ENCODE measurements at regions of chr10 and their contacts with region 1.

Region 1: DNA sequence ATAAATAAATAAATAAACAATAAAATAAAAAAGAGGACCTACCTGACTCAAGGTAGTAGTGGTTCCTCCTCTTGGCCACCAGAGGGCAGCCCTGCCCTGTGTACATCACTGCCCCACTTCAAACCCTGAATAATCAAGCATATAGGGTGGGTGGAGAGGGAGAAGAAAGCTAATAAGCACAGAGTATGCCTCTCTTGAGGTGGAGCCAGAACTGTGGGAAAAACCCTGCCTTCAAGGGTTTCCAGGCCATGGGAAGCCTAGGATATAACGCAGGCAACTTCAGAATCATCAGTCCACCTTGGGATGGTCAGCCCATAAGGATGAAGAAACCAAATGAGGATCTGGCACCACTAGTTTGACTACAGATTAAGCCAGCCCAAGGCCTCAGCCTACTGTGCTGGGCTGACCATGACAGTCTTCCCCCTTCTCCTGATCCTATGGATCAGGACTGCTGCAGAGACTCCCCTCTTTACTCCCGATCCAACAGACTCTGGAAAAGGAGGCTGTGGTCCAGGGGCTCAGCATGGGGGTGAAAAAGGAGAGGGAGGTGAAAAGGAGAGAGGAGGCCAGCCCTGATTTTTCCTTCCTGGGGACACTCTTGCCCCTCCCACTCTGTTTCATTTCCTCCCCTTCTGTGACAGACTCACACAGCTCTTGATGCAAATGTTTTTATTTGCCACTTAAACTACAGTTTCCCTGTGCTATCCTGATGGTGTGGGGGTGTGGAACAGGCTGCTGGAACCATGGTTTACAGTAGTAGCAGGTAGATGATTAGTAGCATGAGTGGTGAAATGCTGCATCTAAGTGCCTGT is 10.1 kb downstream of the AVPI1 start:
- DNase-seq: peak; percentile 77
- ATAC-seq: peak; percentile 92
- H3K4me3 ChIP-seq: no peak overlapping the region
- H3K4me3 Mint-ChIP-seq: peak overlapping the region; percentile 27
- H3K27ac ChIP-seq: peak overlapping the region; percentile 35 to 51
- H3K27ac Mint-ChIP-seq: peak overlapping the region; percentile 67
- H3K4me1 ChIP-seq: peaks cover 9 to 12% of the 10 kb centered on the region in 2 donors
- H3K4me1 Mint-ChIP-seq: peaks cover 13% of the 10 kb centered on the region
- H3K27me3 ChIP-seq: no peaks in the 10 kb centered on the region
- H3K27me3 Mint-ChIP-seq: no peaks in the 10 kb centered on the region
- CTCF ChIP-seq: peak; percentile 94

Region 2: DNA sequence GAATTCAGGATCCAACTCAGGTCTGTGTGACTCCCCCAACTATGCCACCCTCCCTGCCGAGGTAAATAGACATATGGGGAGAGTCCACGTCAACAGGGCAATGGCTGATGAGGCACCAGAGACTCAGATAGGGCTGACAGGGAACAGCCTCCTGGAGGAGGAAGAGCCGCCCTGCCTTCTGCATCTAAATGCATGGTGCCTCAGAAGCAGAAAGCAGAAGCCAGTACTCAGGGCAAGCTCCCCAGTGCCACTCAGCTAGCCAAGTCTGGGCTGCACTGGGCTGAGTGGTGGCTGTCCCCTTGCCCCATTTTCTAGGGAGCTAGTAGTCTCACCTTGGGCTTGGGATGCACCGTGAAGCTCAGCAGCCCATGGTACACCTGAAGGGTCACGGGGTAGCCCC is 286.9 kb before region 1 on chr10:
- CTCF ChIA-PET with region 1: no interaction called
- POLR2A ChIA-PET with region 1: no interaction called
- intact Hi-C with region 1: no loop called
- DNase-seq: no peak
- ATAC-seq: no peak
- H3K4me3 ChIP-seq: no peak overlapping the region
- H3K4me3 Mint-ChIP-seq: no peak overlapping the region
- H3K27ac ChIP-seq: no peak overlapping the region
- H3K27ac Mint-ChIP-seq: no peak overlapping the region
- H3K4me1 ChIP-seq: no peaks in the 10 kb centered on the region
- H3K4me1 Mint-ChIP-seq: no peaks in the 10 kb centered on the region
- H3K27me3 ChIP-seq: no peaks in the 10 kb centered on the region
- H3K27me3 Mint-ChIP-seq: no peaks in the 10 kb centered on the region
- CTCF ChIP-seq: no peak

Region 3: DNA sequence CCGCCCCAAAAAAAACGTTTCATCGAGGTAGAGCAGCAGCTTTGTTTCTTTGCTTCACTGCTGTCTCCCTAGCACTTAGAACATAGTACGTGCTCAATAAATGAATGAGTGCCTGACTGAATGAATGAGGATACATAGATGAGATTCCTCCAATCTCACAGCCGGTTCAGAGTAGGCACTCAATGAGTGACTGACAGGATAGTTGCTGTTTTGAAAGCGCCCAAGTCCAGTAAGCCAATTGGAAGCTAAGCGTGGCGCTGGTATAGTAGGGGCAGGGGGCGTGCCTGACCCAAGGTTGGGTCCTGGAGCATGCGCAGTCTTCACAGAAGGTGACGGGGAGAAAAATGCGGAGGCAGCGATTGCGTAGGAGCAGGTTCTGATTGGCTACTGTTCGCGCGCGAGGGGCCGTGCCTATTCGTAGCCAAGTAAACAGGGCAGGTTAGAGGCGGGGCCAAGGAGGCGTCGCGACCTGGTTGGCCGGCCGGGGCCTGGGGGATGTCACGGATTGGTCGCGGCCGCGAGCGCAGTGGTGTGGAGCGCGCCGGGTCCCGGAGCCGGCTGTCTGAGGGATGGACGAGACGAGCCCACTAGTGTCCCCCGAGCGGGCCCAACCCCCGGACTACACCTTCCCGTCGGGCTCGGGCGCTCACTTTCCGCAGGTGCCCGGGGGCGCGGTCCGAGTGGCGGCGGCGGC is 36.7 kb before region 1 on chr10 and contains the start of gene PI4K2A:
- CTCF ChIA-PET with region 1: interaction called, 5 read pairs
- POLR2A ChIA-PET with region 1: no interaction called
- intact Hi-C with region 1: loop called (anchors 2 kb)
- DNase-seq: peak; percentile 99
- ATAC-seq: peak; percentile 96
- H3K4me3 ChIP-seq: peak within 1 kb of the TSS; percentile 43 to 84 (median 77)
- H3K4me3 Mint-ChIP-seq: peak within 1 kb of the TSS; percentile 99
- H3K27ac ChIP-seq: peak within 1 kb of the TSS; percentile 70 to 86
- H3K27ac Mint-ChIP-seq: peak within 1 kb of the TSS; percentile 97
- H3K4me1 ChIP-seq: peaks cover 8 to 18% of the 10 kb centered on the region in 2 donors
- H3K4me1 Mint-ChIP-seq: peaks cover 22% of the 10 kb centered on the region
- H3K27me3 ChIP-seq: no peaks in the 10 kb centered on the region
- H3K27me3 Mint-ChIP-seq: no peaks in the 10 kb centered on the region
- CTCF ChIP-seq: no peak
- total RNA-seq, gene PI4K2A: 17.7 and 18.4 TPM in 2 replicates

Region 4: DNA sequence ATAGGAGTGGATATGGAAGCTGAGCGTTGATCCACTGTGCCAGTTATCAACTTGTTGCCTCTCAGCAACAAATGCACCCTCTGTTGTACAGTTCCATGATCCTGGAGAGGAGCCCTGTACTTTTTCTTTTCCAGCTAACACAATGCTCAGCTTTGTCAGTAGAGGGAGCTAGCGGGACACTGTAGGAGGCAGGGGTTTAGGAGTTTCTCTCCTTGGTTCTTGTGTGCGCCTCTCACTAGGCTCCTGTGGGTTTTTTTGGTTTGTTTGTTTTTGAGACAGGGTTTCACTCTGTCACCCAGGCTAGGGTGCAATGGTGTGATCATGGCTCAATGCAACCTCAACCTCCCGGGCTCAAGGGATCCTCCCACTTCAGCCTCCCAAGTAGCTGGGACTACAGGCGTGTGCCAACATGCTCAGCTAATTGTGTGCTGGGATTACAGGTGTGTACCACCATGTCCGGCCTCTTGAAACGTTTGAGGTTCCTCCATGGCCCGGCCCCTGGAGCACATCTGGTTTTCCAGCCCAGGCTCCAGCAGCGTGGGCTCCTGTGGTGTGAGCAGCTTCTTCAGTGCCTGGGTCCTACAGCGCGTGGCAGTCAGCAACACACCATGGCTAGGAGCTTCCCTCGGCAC is 24.6 kb after region 1 on chr10:
- CTCF ChIA-PET with region 1: interaction called, 13 read pairs
- POLR2A ChIA-PET with region 1: interaction called, 3 read pairs
- intact Hi-C with region 1: no loop called
- DNase-seq: peak; percentile 66
- ATAC-seq: peak; percentile 75
- H3K4me3 ChIP-seq: no peak overlapping the region
- H3K4me3 Mint-ChIP-seq: no peak overlapping the region
- H3K27ac ChIP-seq: no peak overlapping the region
- H3K27ac Mint-ChIP-seq: no peak overlapping the region
- H3K4me1 ChIP-seq: no peaks in the 10 kb centered on the region
- H3K4me1 Mint-ChIP-seq: no peaks in the 10 kb centered on the region
- H3K27me3 ChIP-seq: peaks cover 0 to 9% (median 2%) of the 10 kb centered on the region in 4 experiments
- H3K27me3 Mint-ChIP-seq: peaks cover 11% of the 10 kb centered on the region
- CTCF ChIP-seq: peak; percentile 78

Region 5: DNA sequence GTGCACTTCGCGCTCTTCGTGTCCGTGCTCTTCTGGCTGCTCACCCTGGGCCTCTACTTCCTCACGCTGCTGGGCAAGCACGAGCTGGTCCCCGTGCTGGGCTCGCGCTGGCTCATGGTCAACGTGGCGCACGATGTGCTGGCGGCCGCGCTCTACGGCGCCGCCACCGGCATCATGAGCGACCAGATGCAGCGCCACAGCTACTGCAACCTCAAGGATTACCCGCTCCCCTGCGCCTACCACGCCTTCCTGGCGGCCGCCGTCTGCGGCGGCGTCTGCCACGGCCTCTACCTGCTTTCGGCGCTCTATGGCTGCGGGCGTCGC is 37.0 kb after region 1 on chr10:
- CTCF ChIA-PET with region 1: interaction called, 14 read pairs
- POLR2A ChIA-PET with region 1: interaction called, 6 read pairs
- intact Hi-C with region 1: loop called (anchors 2 kb)
- DNase-seq: peak; percentile 82
- ATAC-seq: peak; percentile 84
- H3K4me3 ChIP-seq: peak overlapping the region; percentile 4 to 67 (median 58)
- H3K4me3 Mint-ChIP-seq: peak overlapping the region; percentile 100
- H3K27ac ChIP-seq: no peak overlapping the region
- H3K27ac Mint-ChIP-seq: peak overlapping the region; percentile 91
- H3K4me1 ChIP-seq: peaks cover 12 to 18% of the 10 kb centered on the region in 2 donors
- H3K4me1 Mint-ChIP-seq: peaks cover 20% of the 10 kb centered on the region
- H3K27me3 ChIP-seq: peaks cover 0 to 37% (median 16%) of the 10 kb centered on the region in 4 experiments
- H3K27me3 Mint-ChIP-seq: peaks cover 27% of the 10 kb centered on the region
- CTCF ChIP-seq: no peak

Region 6: GRCh38 chr10:97731346-97732051 is 54.5 kb after region 1 on chr10:
- CTCF ChIA-PET with region 1: interaction called, 267 read pairs
- POLR2A ChIA-PET with region 1: no interaction called
- intact Hi-C with region 1: no loop called
- DNase-seq: peak; percentile 76
- ATAC-seq: peak; percentile 70
- H3K4me3 ChIP-seq: no peak overlapping the region
- H3K4me3 Mint-ChIP-seq: no peak overlapping the region
- H3K27ac ChIP-seq: no peak overlapping the region
- H3K27ac Mint-ChIP-seq: peak overlapping the region; percentile 55
- H3K4me1 ChIP-seq: peaks cover 5 to 6% of the 10 kb centered on the region in 2 donors
- H3K4me1 Mint-ChIP-seq: peaks cover 10% of the 10 kb centered on the region
- H3K27me3 ChIP-seq: peaks cover 0 to 3% (median 0%) of the 10 kb centered on the region in 4 experiments
- H3K27me3 Mint-ChIP-seq: peaks cover 4% of the 10 kb centered on the region
- CTCF ChIP-seq: peak; percentile 82

Region 7: GRCh38 chr10:97736902-97737769 is 60.2 kb after region 1 on chr10 and contains the start of gene ZFYVE27:
- CTCF ChIA-PET with region 1: interaction called, 267 read pairs
- POLR2A ChIA-PET with region 1: no interaction called
- intact Hi-C with region 1: no loop called
- DNase-seq: peak; percentile 98
- ATAC-seq: peak; percentile 92
- H3K4me3 ChIP-seq: peak within 1 kb of the TSS; percentile 46 to 97 (median 77)
- H3K4me3 Mint-ChIP-seq: peak within 1 kb of the TSS; percentile 100
- H3K27ac ChIP-seq: peak within 1 kb of the TSS; percentile 92 to 97
- H3K27ac Mint-ChIP-seq: peak within 1 kb of the TSS; percentile 100
- H3K4me1 ChIP-seq: peaks cover 25 to 39% of the 10 kb centered on the region in 2 donors
- H3K4me1 Mint-ChIP-seq: peaks cover 55% of the 10 kb centered on the region
- H3K27me3 ChIP-seq: no peaks in the 10 kb centered on the region
- H3K27me3 Mint-ChIP-seq: no peaks in the 10 kb centered on the region
- CTCF ChIP-seq: no peak
- total RNA-seq, gene ZFYVE27: 79.0 and 79.7 TPM in 2 replicates

Region 8: DNA sequence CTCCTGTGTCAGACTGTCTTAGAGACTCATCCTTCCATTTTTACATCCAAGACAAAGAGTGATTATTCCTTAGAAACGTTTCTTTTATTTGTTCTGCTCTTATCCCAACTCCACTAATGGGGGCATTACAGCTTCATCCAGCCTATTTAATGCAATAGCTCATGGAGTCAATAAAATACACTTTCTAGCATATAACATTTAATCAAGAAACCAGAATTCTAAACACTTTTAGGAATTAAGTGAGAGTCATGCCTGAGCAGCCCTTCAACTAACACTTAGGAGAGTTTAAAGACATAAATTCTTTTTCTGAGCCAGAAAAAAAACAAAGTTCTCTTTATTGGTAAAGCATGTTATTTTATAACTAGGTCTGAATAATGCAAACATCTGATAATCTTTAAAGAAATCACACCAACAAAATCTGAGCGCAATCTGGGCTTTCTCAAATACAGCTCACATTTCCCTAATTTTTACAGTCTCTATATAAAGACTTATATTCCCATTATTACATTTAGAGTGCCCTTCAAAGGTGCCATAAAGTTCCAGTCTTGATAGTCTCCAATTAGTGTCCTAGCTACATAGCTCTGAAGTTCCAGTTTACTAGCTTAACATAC is 1131.4 kb after region 1 on chr10:
- CTCF ChIA-PET with region 1: no interaction called
- POLR2A ChIA-PET with region 1: no interaction called
- intact Hi-C with region 1: no loop called
- DNase-seq: no peak
- ATAC-seq: no peak
- H3K4me3 ChIP-seq: no peak overlapping the region
- H3K4me3 Mint-ChIP-seq: no peak overlapping the region
- H3K27ac ChIP-seq: no peak overlapping the region
- H3K27ac Mint-ChIP-seq: no peak overlapping the region
- H3K4me1 ChIP-seq: no peaks in the 10 kb centered on the region
- H3K4me1 Mint-ChIP-seq: no peaks in the 10 kb centered on the region
- H3K27me3 ChIP-seq: no peaks in the 10 kb centered on the region
- H3K27me3 Mint-ChIP-seq: peaks cover 16% of the 10 kb centered on the region
- CTCF ChIP-seq: no peak

Measured in B cell (primary cell).